Calu3 (cell line): ENCODE measurements at regions of chr5 and their contacts with region 1.

Region 1: GRCh38 chr5:137778772-137779564 is 24.8 kb upstream of the HNRNPA0 start:
- DNase-seq: peak; percentile 37
- H3K4me3 Mint-ChIP-seq: no peak overlapping the region
- H3K27ac Mint-ChIP-seq: no peak overlapping the region
- H3K4me1 Mint-ChIP-seq: peaks cover 9% of the 10 kb centered on the region
- H3K27me3 Mint-ChIP-seq: peaks cover 5% of the 10 kb centered on the region
- CTCF ChIP-seq: peak; percentile 61

Region 2: GRCh38 chr5:137822158-137822764 is 43.3 kb after region 1 on chr5:
- CTCF ChIA-PET with region 1: interaction called, 24 read pairs
- intact Hi-C with region 1: loop called (anchors 1 kb)
- DNase-seq: peak; percentile 75
- H3K4me3 Mint-ChIP-seq: no peak overlapping the region
- H3K27ac Mint-ChIP-seq: no peak overlapping the region
- H3K4me1 Mint-ChIP-seq: peaks cover 21% of the 10 kb centered on the region
- H3K27me3 Mint-ChIP-seq: no peaks in the 10 kb centered on the region
- CTCF ChIP-seq: peak; percentile 60

Region 3: GRCh38 chr5:137880313-137880712 is 101.3 kb after region 1 on chr5:
- CTCF ChIA-PET with region 1: no interaction called
- intact Hi-C with region 1: no loop called
- DNase-seq: no peak
- H3K4me3 Mint-ChIP-seq: no peak overlapping the region
- H3K27ac Mint-ChIP-seq: no peak overlapping the region
- H3K4me1 Mint-ChIP-seq: no peaks in the 10 kb centered on the region
- H3K27me3 Mint-ChIP-seq: no peaks in the 10 kb centered on the region
- CTCF ChIP-seq: no peak

Region 4: GRCh38 chr5:138065102-138065501 is 286.1 kb after region 1 on chr5:
- CTCF ChIA-PET with region 1: interaction called, 3 read pairs
- intact Hi-C with region 1: loop called (anchors 10 kb)
- DNase-seq: peak; percentile 40
- H3K4me3 Mint-ChIP-seq: no peak overlapping the region
- H3K27ac Mint-ChIP-seq: no peak overlapping the region
- H3K4me1 Mint-ChIP-seq: no peaks in the 10 kb centered on the region
- H3K27me3 Mint-ChIP-seq: no peaks in the 10 kb centered on the region
- CTCF ChIP-seq: peak; percentile 60